AG04450 (cell line): ENCODE measurements at regions of chr12 and their contacts with region 1.

Region 1: DNA sequence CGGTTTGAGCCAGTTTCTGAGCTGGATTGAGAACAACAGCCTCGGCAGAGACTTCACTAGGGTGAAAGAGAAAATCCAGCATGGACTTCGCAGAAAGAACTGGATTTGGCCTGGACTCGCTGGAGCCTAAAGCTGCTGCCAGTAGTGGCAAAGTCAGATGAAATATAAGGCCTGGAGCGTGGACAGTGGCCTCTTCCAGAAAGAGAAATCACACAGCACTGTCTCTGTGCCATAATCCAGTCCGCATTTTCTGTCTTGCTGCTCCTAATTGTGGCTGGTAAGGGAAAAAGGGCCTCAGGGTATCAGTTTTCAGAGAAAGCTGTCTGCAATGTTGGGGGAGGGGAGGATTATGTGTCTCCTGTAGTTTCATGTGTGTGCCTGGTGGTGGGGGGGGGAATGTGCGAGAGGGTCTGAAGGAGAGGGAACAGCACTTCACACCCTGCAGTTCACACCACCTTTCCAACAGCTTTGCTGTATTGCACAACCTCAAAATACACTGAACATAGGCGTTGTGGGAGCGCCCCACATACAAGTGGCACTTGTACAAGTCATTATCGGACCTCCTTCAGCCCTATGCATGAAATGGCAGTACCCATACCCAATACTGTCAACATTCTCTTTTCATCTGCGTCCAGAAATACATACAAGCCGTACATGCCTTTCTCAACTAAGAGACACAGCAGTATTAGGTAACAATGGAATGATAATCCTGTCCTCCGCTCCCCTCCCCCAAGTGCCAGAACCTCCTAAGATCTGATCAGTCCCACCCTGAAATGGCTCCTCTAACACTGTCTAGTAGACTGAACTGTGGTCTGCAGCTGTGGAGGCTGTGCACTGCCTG is 107.5 kb upstream of the ATF7IP start:
- DNase-seq: peak; percentile 99
- H3K4me3 ChIP-seq: 0 out of 2 replicates have a peak overlapping the region, but pooled peaks have one; percentile 32
- H3K27ac ChIP-seq: peak overlapping the region; percentile 74
- H3K27me3 ChIP-seq: no peaks in the 10 kb centered on the region
- CTCF ChIP-seq: no peak

Region 2: DNA sequence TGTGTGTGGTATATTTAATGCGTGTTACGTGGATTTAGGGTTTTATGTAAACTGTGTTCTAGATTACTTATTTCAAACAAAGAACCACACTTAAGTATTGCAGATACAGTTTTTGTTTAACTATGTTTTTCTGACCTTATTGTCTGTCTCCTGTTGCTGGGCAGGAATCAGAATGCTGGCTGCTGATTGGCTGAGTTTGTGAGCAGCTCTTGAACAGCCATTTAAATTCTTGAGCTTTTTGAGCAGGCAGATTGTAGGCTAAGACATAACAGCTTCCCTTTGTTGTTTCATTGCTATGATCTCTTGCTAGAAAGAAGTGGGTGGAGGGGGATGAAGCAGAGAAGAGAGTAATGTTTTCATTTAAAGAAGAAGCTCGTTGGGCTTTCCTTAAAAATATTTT is 159.8 kb after region 1 on chr12:
- CTCF ChIA-PET with region 1: interaction called, 3 read pairs
- POLR2A ChIA-PET with region 1: interaction called, 15 read pairs
- DNase-seq: peak; percentile 76
- H3K4me3 ChIP-seq: no peak overlapping the region
- H3K27ac ChIP-seq: no peak overlapping the region
- H3K27me3 ChIP-seq: no peaks in the 10 kb centered on the region
- CTCF ChIP-seq: no peak